Heart left ventricle (tissue), 16 donors: ENCODE measurements at regions of chr17 and their contacts with region 1.

Region 1: DNA sequence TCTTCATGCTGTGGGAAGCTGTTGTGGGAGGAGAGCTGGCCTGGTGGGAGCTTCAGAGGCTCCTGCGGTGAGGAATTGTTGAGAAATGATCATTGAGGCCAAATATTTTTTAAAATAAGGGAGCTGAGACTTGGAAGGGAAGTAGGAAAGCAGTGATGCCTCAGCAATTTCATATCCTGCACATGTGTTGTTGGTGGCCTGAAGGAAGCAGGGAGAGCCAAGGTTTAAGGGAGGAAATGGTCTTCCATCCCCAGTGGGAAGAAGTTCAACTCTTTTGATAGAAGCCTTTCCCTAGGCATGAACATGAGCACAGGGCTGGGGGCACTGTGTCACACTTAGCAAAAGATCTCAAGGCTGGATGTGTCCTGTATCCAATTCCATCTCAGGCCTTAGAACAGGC is at the start of gene CCL14:
- DNase-seq: no peak
- ATAC-seq: peak in 2 of 4 donors; percentile 29 to 36
- H3K4me3 ChIP-seq: peak within 1 kb of the TSS in 4 of 12 donors; percentile 2 to 39 (median 18)
- H3K27ac ChIP-seq: peak within 1 kb of the TSS in 5 of 12 donors; percentile 18 to 58 (median 29)
- H3K4me1 ChIP-seq: peaks cover 0 to 21% (median 2%) of the 10 kb centered on the region in 12 donors
- H3K27me3 ChIP-seq: peaks cover 0 to 1% (median 0%) of the 10 kb centered on the region in 9 donors
- CTCF ChIP-seq: no peak
- POLR2A ChIP-seq: no peak
- total RNA-seq, gene CCL14: 0.69 to 19.1 (median 3.2) TPM

Region 2: GRCh38 chr17:36133602-36134236 is 147.1 kb after region 1 on chr17:
- intact Hi-C with region 1: loop called in 1 of 10 experiments (anchors 5 kb)
- DNase-seq: no peak
- ATAC-seq: peak in 2 of 4 donors; percentile 22 to 29
- H3K4me3 ChIP-seq: no peak overlapping the region
- H3K27ac ChIP-seq: no peak overlapping the region
- H3K4me1 ChIP-seq: peaks cover 0 to 22% (median 0%) of the 10 kb centered on the region in 12 donors
- H3K27me3 ChIP-seq: peaks cover 0 to 31% (median 0%) of the 10 kb centered on the region in 9 donors
- CTCF ChIP-seq: no peak
- POLR2A ChIP-seq: no peak